ENCODE measurements at regions of chr6 and their contacts with region 1.

Region 1: DNA sequence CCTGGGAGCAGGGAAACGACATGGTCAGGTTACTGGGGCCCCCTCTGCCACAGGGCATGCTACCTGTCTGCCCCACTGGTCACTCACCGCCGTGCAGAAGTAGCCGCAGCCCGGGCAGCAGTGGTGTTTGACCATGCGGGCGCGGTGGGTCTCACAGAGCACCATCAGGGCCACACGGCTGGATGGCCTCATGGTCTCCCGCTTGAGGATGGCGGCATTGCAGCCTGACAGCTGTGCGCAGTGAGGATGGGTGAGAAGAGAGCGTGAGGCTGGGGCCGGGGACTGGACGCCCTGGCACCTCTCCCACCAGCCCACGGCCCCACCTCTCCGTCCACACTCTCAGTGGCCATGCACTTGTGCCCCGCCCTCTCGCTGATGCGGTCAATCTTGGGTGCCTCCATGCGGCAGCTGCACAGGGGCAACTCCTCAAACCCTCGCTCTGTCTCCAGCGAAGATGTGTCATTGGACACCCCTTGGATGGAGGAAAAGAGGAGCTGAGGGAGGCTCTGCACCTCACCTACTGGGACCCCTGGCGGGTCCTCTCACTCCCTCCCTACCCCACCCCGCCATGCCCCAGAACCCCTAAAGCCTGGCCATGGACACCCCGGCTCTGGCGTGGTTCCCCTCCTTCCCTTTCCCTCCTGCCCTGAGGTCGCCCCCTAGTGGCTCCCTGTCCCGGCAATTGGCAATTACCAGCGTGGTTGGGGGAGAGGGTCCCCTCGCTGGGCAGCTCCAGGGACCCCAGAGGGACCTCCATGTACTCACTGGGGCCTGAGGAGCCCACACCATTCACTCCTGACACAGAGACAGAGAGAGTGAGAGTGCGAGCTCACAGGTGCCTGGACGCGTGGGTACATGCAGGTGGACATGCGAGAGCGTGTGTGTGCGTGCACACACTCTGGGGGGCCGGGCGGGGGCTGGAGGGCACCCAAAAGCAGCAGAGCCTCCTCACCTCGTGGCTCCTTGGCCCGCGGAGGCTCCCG is 8.9 kb downstream of the EHMT2 start:
- DNase-seq: peak; percentile 62
- ATAC-seq: no peak
- H3K4me3 ChIP-seq: no peak overlapping the region
- H3K4me3 Mint-ChIP-seq: no peak overlapping the region
- H3K27ac ChIP-seq: no peak overlapping the region
- H3K27ac Mint-ChIP-seq: peak overlapping the region; percentile 32
- H3K4me1 ChIP-seq: no peaks in the 10 kb centered on the region
- H3K4me1 Mint-ChIP-seq: no peaks in the 10 kb centered on the region
- H3K27me3 ChIP-seq: no peaks in the 10 kb centered on the region
- H3K27me3 Mint-ChIP-seq: no peaks in the 10 kb centered on the region
- CTCF ChIP-seq: peak; percentile 77

Region 2: DNA sequence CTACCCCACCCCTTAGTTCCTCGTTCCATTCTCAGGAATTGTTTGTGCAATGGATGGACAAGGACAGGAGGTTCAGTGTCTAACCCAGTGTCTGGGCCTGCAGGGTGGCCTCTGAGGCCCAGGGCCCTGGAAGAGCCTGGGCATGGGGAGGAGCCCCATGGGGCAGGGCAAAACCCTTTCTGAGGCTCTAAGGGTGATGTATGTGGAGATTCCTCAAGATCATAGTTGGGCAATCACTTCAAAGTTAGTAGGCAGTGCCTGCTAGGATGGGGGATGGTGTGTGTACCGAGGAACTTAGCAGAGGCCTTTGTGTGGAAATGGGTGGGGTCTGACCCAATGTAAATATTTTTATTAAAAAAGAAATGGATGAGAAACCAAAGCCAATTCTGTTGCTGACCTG is 32.2 kb after region 1 on chr6:
- CTCF ChIA-PET with region 1: interaction called, 12 read pairs
- POLR2A ChIA-PET with region 1: no interaction called
- intact Hi-C with region 1: no loop called
- DNase-seq: no peak
- ATAC-seq: no peak
- H3K4me3 ChIP-seq: no peak overlapping the region
- H3K4me3 Mint-ChIP-seq: no peak overlapping the region
- H3K27ac ChIP-seq: no peak overlapping the region
- H3K27ac Mint-ChIP-seq: no peak overlapping the region
- H3K4me1 ChIP-seq: no peaks in the 10 kb centered on the region
- H3K4me1 Mint-ChIP-seq: no peaks in the 10 kb centered on the region
- H3K27me3 ChIP-seq: no peaks in the 10 kb centered on the region
- H3K27me3 Mint-ChIP-seq: peaks cover 3% of the 10 kb centered on the region
- CTCF ChIP-seq: no peak